Esophagus muscularis mucosa (tissue), 4 donors: ENCODE measurements at regions of chr14 and their contacts with region 1.

Region 1: GRCh38 chr14:99982537-99983250 is 82.5 kb upstream of the EVL start:
- DNase-seq: no peak
- H3K4me3 ChIP-seq: no peak overlapping the region
- H3K27ac ChIP-seq: no peak overlapping the region
- H3K4me1 ChIP-seq: peaks cover 3 to 24% (median 22%) of the 10 kb centered on the region in 4 donors
- H3K27me3 ChIP-seq: no peaks in the 10 kb centered on the region
- CTCF ChIP-seq: peak; percentile 88 to 91 (median 90)
- EP300 ChIP-seq: no peak
- POLR2A ChIP-seq: no peak

Region 2: GRCh38 chr14:100031536-100032281 is 49.0 kb after region 1 on chr14:
- intact Hi-C with region 1: loop called (anchors 5 kb)
- DNase-seq: no peak
- H3K4me3 ChIP-seq: peak overlapping the region; percentile 21 to 44 (median 37)
- H3K27ac ChIP-seq: peak overlapping the region; percentile 67 to 78 (median 76)
- H3K4me1 ChIP-seq: peaks cover 17 to 35% (median 32%) of the 10 kb centered on the region in 4 donors
- H3K27me3 ChIP-seq: no peaks in the 10 kb centered on the region
- CTCF ChIP-seq: no peak
- EP300 ChIP-seq: no peak
- POLR2A ChIP-seq: no peak

Region 3: GRCh38 chr14:100108042-100108825 is 125.5 kb after region 1 on chr14:
- intact Hi-C with region 1: loop called (anchors 2 kb)
- DNase-seq: peak; percentile 94
- H3K4me3 ChIP-seq: no peak overlapping the region
- H3K27ac ChIP-seq: no peak overlapping the region
- H3K4me1 ChIP-seq: peaks cover 52 to 60% (median 55%) of the 10 kb centered on the region in 4 donors
- H3K27me3 ChIP-seq: no peaks in the 10 kb centered on the region
- CTCF ChIP-seq: peak; percentile 78 to 89 (median 82)
- EP300 ChIP-seq: no peak
- POLR2A ChIP-seq: no peak

Region 4: GRCh38 chr14:100192672-100193416 is 210.2 kb after region 1 on chr14:
- intact Hi-C with region 1: loop called (anchors 2 kb)
- DNase-seq: peak; percentile 100
- H3K4me3 ChIP-seq: peak overlapping the region; percentile 51 to 58 (median 53)
- H3K27ac ChIP-seq: peak overlapping the region; percentile 87 to 95 (median 90)
- H3K4me1 ChIP-seq: peaks cover 14 to 21% (median 19%) of the 10 kb centered on the region in 4 donors
- H3K27me3 ChIP-seq: no peaks in the 10 kb centered on the region
- CTCF ChIP-seq: peak; percentile 86 to 93 (median 87)
- EP300 ChIP-seq: no peak
- POLR2A ChIP-seq: peak; percentile 39